ENCODE measurements at regions of chr17 and their contacts with region 1.

Region 1: GRCh38 chr17:50956750-50957523 is 90.8 kb upstream of the TOB1 start:
- DNase-seq: peak; percentile 82
- H3K4me3 Mint-ChIP-seq: no peak overlapping the region
- H3K27ac Mint-ChIP-seq: no peak overlapping the region
- H3K4me1 Mint-ChIP-seq: peaks cover 20% of the 10 kb centered on the region
- H3K27me3 Mint-ChIP-seq: peaks cover 29% of the 10 kb centered on the region

Region 2: DNA sequence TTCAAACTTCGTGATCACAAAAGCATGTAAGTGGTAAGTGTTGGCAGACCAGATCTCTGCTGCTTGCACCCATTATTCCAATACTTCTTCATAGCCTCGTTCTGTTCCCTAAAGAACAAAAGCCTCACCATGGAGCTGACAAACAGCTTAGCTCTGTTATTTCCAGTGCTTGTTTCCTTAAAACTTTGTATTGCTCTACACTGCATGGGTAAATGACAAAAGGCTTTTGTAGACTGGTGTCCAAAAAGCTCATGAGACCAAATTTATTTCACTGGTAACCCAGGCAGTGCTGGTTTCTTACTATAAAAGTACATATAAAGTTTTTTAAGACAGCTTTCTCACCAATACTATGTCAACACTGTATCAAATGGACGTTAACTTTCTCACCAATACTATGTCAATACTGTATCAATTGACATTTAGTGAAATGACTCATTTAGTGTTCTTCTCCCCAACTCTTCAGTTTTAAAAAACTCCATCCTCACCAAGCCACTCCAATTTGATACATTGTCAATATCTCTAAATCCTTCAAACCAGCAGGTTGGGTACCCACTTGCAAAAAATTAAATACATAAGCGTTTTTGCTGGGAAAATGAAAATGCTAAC is 95.8 kb before region 1 on chr17:
- CTCF ChIA-PET with region 1: interaction called, 173 read pairs
- DNase-seq: no peak
- H3K4me3 Mint-ChIP-seq: no peak overlapping the region
- H3K27ac Mint-ChIP-seq: no peak overlapping the region
- H3K4me1 Mint-ChIP-seq: peaks cover 26% of the 10 kb centered on the region
- H3K27me3 Mint-ChIP-seq: no peaks in the 10 kb centered on the region

Region 3: GRCh38 chr17:50865984-50866774 is 90.8 kb before region 1 on chr17 and contains the start of gene TOB1:
- CTCF ChIA-PET with region 1: interaction called, 26 read pairs
- DNase-seq: peak; percentile 97
- H3K4me3 Mint-ChIP-seq: peak within 1 kb of the TSS; percentile 95
- H3K27ac Mint-ChIP-seq: peak within 1 kb of the TSS; percentile 98
- H3K4me1 Mint-ChIP-seq: peaks cover 54% of the 10 kb centered on the region
- H3K27me3 Mint-ChIP-seq: peaks cover 3% of the 10 kb centered on the region